ENCODE measurements at regions of chr12 and their contacts with region 1.

Region 1: GRCh38 chr12:14239350-14239934 is 126.0 kb upstream of the ATF7IP start:
- DNase-seq: peak; percentile 86
- ATAC-seq: peak; percentile 90
- H3K4me3 ChIP-seq: peak overlapping the region; percentile 42; the same call in 1 of the 2 replicates
- H3K27ac ChIP-seq: peak overlapping the region; percentile 99
- H3K4me1 ChIP-seq: peaks cover 23% of the 10 kb centered on the region
- H3K27me3 ChIP-seq: no peaks in the 10 kb centered on the region
- CTCF ChIP-seq: peak; percentile 30 to 47 (median 30); a peak in 4 of 6 replicates
- EP300 ChIP-seq: peak; percentile 40 to 53; a peak in 2 of 4 replicates
- POLR2A ChIP-seq: no peak
- RAD21 ChIP-seq: peak; percentile 34; the same call in 1 of the 2 replicates

Region 2: DNA sequence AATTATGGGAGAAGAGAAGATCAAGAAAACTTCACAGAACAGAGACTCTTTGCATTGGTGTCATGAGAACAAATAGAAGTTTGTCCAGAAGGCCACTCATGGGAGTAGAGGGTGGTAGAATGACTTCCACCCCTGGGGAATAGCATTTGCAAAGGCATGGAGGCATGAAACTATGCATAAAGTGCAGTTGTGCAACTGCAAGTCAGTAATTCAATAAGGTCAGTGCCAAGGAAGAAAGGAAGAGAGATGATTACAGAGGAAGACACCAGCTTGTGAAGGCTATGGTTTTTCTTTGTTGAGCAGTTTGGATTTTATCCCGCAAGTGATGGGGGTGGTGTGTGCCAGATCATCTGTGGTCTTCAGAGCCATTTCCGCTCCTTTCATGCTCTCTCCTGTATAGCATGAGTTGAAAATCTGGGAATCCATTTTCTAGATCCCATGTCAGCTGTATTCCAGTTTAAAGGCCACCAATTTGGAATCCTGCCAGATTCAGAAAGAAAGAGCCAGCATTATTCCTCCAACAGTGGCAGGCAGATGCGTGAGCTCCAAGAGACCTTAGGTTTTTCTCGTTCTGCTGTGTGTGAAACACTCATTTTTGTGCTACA is 190.4 kb before region 1 on chr12:
- CTCF ChIA-PET with region 1: no interaction called
- POLR2A ChIA-PET with region 1: no interaction called
- RAD21 ChIA-PET with region 1: no interaction called
- SMC1A ChIA-PET with region 1: no interaction called
- in situ Hi-C with region 1: no loop called
- intact Hi-C with region 1: no loop called
- DNase-seq: no peak
- ATAC-seq: no peak
- H3K4me3 ChIP-seq: no peak overlapping the region
- H3K27ac ChIP-seq: no peak overlapping the region
- H3K4me1 ChIP-seq: no peaks in the 10 kb centered on the region
- H3K27me3 ChIP-seq: no peaks in the 10 kb centered on the region
- CTCF ChIP-seq: no peak
- EP300 ChIP-seq: no peak
- POLR2A ChIP-seq: no peak
- RAD21 ChIP-seq: no peak

Region 3: GRCh38 chr12:14072987-14073386 is 166.5 kb before region 1 on chr12:
- CTCF ChIA-PET with region 1: no interaction called
- POLR2A ChIA-PET with region 1: no interaction called
- RAD21 ChIA-PET with region 1: no interaction called
- SMC1A ChIA-PET with region 1: no interaction called
- in situ Hi-C with region 1: no loop called
- intact Hi-C with region 1: no loop called
- DNase-seq: no peak
- ATAC-seq: no peak
- H3K4me3 ChIP-seq: no peak overlapping the region
- H3K27ac ChIP-seq: no peak overlapping the region
- H3K4me1 ChIP-seq: no peaks in the 10 kb centered on the region
- H3K27me3 ChIP-seq: no peaks in the 10 kb centered on the region
- CTCF ChIP-seq: no peak
- EP300 ChIP-seq: no peak
- POLR2A ChIP-seq: no peak
- RAD21 ChIP-seq: no peak

Region 4: DNA sequence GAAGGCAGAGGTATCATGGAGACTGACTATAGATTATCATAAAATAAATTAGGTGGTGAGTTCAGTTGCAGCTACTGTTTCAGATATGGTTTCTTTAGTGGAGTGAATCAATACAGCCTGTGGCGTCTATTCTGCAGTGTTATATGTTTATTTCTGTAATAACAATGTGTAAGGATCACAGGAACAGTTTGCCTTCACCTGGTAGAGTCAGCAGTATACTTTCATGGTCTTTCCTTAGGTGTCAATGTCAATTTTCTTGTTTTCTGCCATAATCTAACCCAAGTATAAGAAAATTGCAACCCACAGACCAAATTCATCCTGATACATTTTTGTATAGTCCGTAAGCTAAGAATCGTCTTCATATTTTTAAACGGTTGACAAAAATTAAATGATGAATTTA is 14.4 kb before region 1 on chr12:
- CTCF ChIA-PET with region 1: interaction called, 21 read pairs
- POLR2A ChIA-PET with region 1: interaction called, 6 read pairs
- RAD21 ChIA-PET with region 1: interaction called, 14 read pairs
- SMC1A ChIA-PET with region 1: interaction called, 19 read pairs
- in situ Hi-C with region 1: no loop called
- intact Hi-C with region 1: no loop called
- DNase-seq: no peak
- ATAC-seq: no peak
- H3K4me3 ChIP-seq: no peak overlapping the region
- H3K27ac ChIP-seq: no peak overlapping the region
- H3K4me1 ChIP-seq: peaks cover 3% of the 10 kb centered on the region; the same call in 1 of the 2 replicates
- H3K27me3 ChIP-seq: no peaks in the 10 kb centered on the region
- CTCF ChIP-seq: no peak
- EP300 ChIP-seq: no peak
- POLR2A ChIP-seq: no peak
- RAD21 ChIP-seq: no peak

Region 5: DNA sequence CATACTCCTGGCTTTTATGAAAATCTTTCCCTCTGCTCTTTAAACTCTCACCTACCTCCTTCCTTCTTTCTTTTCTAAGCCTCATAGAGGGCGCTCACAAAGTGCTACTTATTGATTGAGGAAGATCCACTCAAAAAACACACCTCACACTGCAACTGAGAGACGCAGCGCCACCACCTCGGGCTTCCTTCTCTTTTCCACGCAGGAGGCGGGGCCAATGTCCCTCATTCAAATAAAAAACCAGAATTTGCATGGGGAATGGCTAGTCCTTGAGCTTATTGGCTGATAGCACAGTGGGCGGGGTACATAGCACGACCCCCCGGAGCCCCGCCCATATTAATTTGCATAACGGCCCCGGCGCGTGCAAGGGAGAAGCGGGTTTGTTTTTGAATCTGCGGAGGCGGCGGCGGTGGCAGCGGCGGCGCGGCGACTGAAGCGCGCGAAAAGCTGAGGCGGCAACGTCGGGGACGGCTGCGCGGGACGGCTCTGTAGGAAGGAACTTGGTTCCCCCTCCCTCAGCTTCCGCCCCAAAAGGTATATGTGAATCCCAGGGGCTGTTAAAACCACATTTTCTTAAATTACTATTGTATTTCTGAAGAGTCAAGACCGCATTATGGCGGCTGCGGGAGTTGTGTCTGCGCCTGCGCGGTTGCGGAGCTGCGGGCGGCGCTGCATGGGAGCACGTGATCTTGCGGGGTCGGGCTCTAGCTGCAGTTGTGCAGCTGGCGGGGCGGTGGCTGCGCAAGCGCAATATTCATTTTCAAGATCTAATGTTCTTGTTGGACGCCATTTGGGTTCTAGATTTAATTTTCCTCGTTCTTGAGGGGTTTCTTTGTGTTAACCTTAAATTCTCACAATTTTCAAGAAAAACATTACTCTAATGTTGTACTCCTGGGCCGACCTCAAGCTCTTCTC is 126.1 kb after region 1 on chr12 and contains the start of gene ATF7IP:
- CTCF ChIA-PET with region 1: interaction called, 24 read pairs
- POLR2A ChIA-PET with region 1: interaction called, 18 read pairs
- RAD21 ChIA-PET with region 1: interaction called, 45 read pairs
- SMC1A ChIA-PET with region 1: interaction called, 63 read pairs
- in situ Hi-C with region 1: loop called (anchors 5 kb)
- intact Hi-C with region 1: loop called (anchors 1 kb)
- DNase-seq: peak; percentile 83
- ATAC-seq: peak; percentile 77
- H3K4me3 ChIP-seq: peak within 1 kb of the TSS; percentile 59
- H3K27ac ChIP-seq: peak within 1 kb of the TSS; percentile 89
- H3K4me1 ChIP-seq: peaks cover 12% of the 10 kb centered on the region
- H3K27me3 ChIP-seq: no peaks in the 10 kb centered on the region
- CTCF ChIP-seq: peak in 2 of 3 experiments; percentile 27 to 32; a peak in 3 of 6 replicates
- EP300 ChIP-seq: peak; percentile 30 to 83; a peak in 2 of 4 replicates
- POLR2A ChIP-seq: peak; percentile 91
- RAD21 ChIP-seq: peak; percentile 54
- polyA plus RNA-seq, gene ATF7IP: 6.2 to 8.1 TPM

Region 6: DNA sequence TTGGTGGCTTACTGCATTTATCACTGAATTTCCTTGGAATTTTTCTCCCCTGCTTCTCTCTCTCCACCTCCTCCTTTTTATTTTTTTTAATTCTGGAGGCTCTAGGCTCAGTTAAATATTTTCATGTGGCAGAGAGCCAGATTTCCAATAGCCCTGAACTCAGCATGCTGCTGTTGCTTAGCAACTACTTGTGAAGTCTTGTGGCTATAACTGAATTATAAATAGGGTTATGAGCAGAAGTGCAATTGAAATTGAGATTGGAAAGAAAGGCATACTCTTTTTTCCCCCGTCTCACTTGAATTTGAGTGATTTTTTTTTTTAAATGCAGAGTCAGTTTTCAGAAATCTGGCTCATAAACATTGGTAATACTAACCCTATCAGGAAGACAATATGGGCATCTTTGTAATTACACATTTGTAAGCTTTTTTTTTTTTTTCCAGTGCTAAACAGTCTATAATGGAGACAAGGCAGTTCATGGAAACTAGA is 164.3 kb after region 1 on chr12:
- CTCF ChIA-PET with region 1: no interaction called
- POLR2A ChIA-PET with region 1: no interaction called
- RAD21 ChIA-PET with region 1: interaction called, 10 read pairs
- SMC1A ChIA-PET with region 1: interaction called, 7 read pairs
- in situ Hi-C with region 1: no loop called
- intact Hi-C with region 1: loop called (anchors 5 kb)
- DNase-seq: peak; percentile 49
- ATAC-seq: peak; percentile 75
- H3K4me3 ChIP-seq: peak overlapping the region; percentile 13; the same call in 1 of the 2 replicates
- H3K27ac ChIP-seq: peak overlapping the region; percentile 77
- H3K4me1 ChIP-seq: peaks cover 3% of the 10 kb centered on the region; the same call in 1 of the 2 replicates
- H3K27me3 ChIP-seq: no peaks in the 10 kb centered on the region
- CTCF ChIP-seq: no peak
- EP300 ChIP-seq: no peak
- POLR2A ChIP-seq: no peak
- RAD21 ChIP-seq: no peak

Region 7: GRCh38 chr12:14613718-14614117 is 374.3 kb after region 1 on chr12:
- CTCF ChIA-PET with region 1: interaction called, 5 read pairs
- POLR2A ChIA-PET with region 1: no interaction called
- RAD21 ChIA-PET with region 1: interaction called, 5 read pairs
- SMC1A ChIA-PET with region 1: interaction called, 16 read pairs
- in situ Hi-C with region 1: loop called (anchors 5 kb)
- intact Hi-C with region 1: loop called (anchors 2 kb)
- DNase-seq: peak; percentile 93
- ATAC-seq: peak; percentile 95
- H3K4me3 ChIP-seq: peak overlapping the region; percentile 24; the same call in 1 of the 2 replicates
- H3K27ac ChIP-seq: peak overlapping the region; percentile 82
- H3K4me1 ChIP-seq: peaks cover 27% of the 10 kb centered on the region
- H3K27me3 ChIP-seq: no peaks in the 10 kb centered on the region
- CTCF ChIP-seq: no peak
- EP300 ChIP-seq: peak; percentile 86 to 98
- POLR2A ChIP-seq: no peak; the same call in 1 of the 2 replicates
- RAD21 ChIP-seq: no peak

Region 8: DNA sequence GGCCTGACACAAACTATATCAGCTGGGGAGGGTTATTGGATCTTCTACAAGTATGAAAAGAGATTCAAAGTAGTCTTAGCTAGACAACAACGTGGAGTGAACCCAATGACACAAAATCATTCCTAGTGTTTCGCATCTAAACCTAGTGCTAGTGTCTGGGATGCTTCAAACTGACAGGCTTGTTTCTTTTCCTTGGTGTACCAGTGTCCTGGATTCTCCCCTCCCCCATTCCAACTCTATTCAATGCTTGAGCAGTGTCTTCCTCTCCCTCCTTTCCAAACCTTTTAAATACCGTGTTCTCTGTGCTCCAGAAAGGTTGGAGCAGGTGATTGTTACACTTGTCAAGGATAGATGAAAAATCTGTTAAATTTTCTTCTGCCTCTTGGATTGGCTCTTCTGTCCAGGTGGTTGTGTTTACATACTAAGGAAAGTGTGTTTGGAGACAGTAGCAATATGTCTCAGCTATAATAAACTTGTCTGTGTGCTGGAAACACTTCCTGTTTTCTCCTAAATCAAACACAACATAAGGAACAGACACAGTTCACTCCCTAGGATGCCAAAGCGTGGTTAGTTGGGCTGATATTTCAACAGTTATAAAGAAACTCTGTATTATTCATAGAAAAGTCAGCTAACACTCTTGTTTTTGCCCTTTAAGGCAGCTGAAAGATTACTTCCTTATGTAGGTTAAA is 471.3 kb after region 1 on chr12:
- CTCF ChIA-PET with region 1: interaction called, 48 read pairs
- POLR2A ChIA-PET with region 1: interaction called, 4 read pairs
- RAD21 ChIA-PET with region 1: interaction called, 22 read pairs
- SMC1A ChIA-PET with region 1: interaction called, 28 read pairs
- in situ Hi-C with region 1: loop called (anchors 5 kb)
- intact Hi-C with region 1: no loop called
- DNase-seq: no peak
- ATAC-seq: no peak
- H3K4me3 ChIP-seq: no peak overlapping the region
- H3K27ac ChIP-seq: no peak overlapping the region
- H3K4me1 ChIP-seq: no peaks in the 10 kb centered on the region
- H3K27me3 ChIP-seq: no peaks in the 10 kb centered on the region
- CTCF ChIP-seq: no peak
- EP300 ChIP-seq: no peak
- POLR2A ChIP-seq: no peak
- RAD21 ChIP-seq: no peak

Measured in GM12878 (cell line).